H1 (cell line): ENCODE measurements at regions of chr17 and their contacts with region 1.

Region 1: DNA sequence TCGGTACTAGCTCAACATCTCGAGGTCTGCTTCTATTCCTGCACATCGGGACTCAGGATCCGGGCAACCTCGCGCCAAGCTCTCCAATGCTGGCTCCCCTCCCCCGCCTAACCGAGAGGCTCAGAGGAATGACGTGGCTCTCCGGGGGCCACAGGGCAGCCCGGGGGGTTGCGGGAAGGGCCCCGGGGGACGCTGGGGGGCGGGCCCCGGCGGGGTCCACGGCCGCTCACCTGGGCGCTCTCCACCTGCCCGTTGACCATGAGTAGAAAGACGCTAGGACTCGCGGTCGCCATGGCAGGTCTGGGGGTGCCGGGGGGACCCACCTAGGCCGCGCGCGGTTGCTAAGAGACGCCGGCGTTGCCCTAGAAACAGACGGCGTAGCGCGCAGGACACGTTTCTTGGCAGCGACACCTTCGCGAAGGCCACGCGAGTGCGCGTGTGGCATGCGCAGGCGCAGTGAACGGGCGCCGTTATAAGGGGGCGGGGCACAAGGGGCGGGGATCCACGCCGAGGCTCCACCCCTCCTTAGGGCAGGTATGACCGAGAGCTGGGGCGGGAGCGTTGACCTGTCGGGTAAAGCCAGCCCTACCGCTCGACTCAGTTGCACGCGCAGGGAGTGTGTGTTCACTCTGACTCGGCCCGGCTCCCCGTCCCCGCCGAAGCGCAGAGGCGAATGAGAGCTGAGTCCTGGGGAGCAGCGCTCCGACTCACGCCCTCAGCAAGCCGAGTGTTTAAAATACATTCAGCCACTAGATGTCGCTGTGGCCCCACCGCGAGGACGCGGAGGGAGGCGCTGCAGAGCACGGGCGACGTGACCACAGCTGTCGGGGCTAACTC is at the start of gene B9D1:
- DNase-seq: peak; percentile 73 to 97
- H3K4me3 ChIP-seq: peak within 1 kb of the TSS; percentile 34 to 93 (median 75)
- H3K27ac ChIP-seq: no peak within 1 kb of the TSS; the same call in 1 of the 2 replicates
- H3K4me1 ChIP-seq: peaks cover 0 to 9% (median 3%) of the 10 kb centered on the region in 4 experiments; a peak in 4 of 7 replicates
- H3K27me3 ChIP-seq: no peaks in the 10 kb centered on the region; a peak in 1 of 7 replicates
- CTCF ChIP-seq: peak; percentile 91 to 99 (median 95)
- EP300 ChIP-seq: peak in 1 of 2 experiments; percentile 27; a peak in 1 of 3 replicates
- POLR2A ChIP-seq: no peak
- RAD21 ChIP-seq: peak; percentile 99
- total RNA-seq, gene B9D1: 24.6 and 25.4 TPM in 2 replicates

Region 2: GRCh38 chr17:19321481-19322128 is 40.9 kb before region 1 on chr17:
- CTCF ChIA-PET with region 1: interaction called, 11 read pairs
- POLR2A ChIA-PET with region 1: no interaction called
- DNase-seq: no peak
- H3K4me3 ChIP-seq: no peak overlapping the region
- H3K27ac ChIP-seq: no peak overlapping the region
- H3K4me1 ChIP-seq: peaks cover 0 to 16% (median 8%) of the 10 kb centered on the region in 4 experiments; a peak in 6 of 7 replicates
- H3K27me3 ChIP-seq: no peaks in the 10 kb centered on the region
- CTCF ChIP-seq: peak; percentile 38 to 61 (median 56)
- EP300 ChIP-seq: no peak
- POLR2A ChIP-seq: no peak
- RAD21 ChIP-seq: peak in 1 of 2 experiments; percentile 40; a peak in 3 of 4 replicates

Region 3: GRCh38 chr17:19386974-19387920 is 24.8 kb after region 1 on chr17 and contains the start of gene MFAP4:
- CTCF ChIA-PET with region 1: interaction called, 12 read pairs
- POLR2A ChIA-PET with region 1: interaction called, 6 read pairs
- DNase-seq: peak in 1 of 2 experiments; percentile 66
- H3K4me3 ChIP-seq: peak within 1 kb of the TSS in 3 of 4 experiments; percentile 17 to 49 (median 18); a peak in 4 of 8 replicates
- H3K27ac ChIP-seq: peak within 1 kb of the TSS; percentile 30; the same call in 1 of the 2 replicates
- H3K4me1 ChIP-seq: peaks cover 8 to 22% (median 15%) of the 10 kb centered on the region in 4 experiments
- H3K27me3 ChIP-seq: no peaks in the 10 kb centered on the region
- CTCF ChIP-seq: no peak
- EP300 ChIP-seq: no peak
- POLR2A ChIP-seq: no peak
- RAD21 ChIP-seq: no peak
- total RNA-seq, gene MFAP4: 3.6 and 3.8 TPM in 2 replicates

Region 4: GRCh38 chr17:19426631-19427030 is 64.1 kb after region 1 on chr17:
- CTCF ChIA-PET with region 1: interaction called, 14 read pairs
- POLR2A ChIA-PET with region 1: no interaction called
- DNase-seq: no peak
- H3K4me3 ChIP-seq: no peak overlapping the region; a peak in 1 of 8 replicates
- H3K27ac ChIP-seq: no peak overlapping the region
- H3K4me1 ChIP-seq: peaks cover 0 to 7% (median 1%) of the 10 kb centered on the region in 4 experiments; a peak in 3 of 7 replicates
- H3K27me3 ChIP-seq: no peaks in the 10 kb centered on the region
- CTCF ChIP-seq: no peak
- EP300 ChIP-seq: no peak
- POLR2A ChIP-seq: no peak
- RAD21 ChIP-seq: no peak

Region 5: DNA sequence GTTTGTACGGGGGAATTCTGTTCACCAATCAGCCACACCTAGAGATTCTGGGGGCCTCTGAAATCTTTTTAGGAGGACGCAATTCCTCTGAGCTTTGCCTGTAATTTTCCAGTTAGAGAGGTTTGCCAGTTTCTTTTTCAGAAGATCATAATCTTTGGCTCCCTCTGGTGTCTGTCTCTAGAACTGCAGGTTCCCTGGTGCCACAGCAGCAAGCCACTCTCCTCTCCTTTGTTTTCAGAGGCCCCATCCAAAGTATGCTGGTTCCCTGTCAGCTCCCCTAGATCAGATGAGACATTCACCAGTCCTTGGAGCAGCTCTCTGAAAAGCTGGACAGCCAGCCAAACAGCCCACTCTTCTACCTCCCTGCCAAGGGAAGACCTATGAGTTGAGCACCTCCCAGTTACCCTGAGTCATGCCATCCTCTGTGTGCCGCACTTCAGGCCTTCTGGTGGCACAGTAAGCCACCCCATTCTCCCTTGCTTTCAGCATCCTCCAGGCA is 84.6 kb after region 1 on chr17:
- CTCF ChIA-PET with region 1: interaction called, 66 read pairs
- POLR2A ChIA-PET with region 1: interaction called, 9 read pairs
- DNase-seq: peak in 1 of 2 experiments; percentile 93
- H3K4me3 ChIP-seq: no peak overlapping the region
- H3K27ac ChIP-seq: no peak overlapping the region
- H3K4me1 ChIP-seq: peaks cover 2 to 9% (median 4%) of the 10 kb centered on the region in 4 experiments; a peak in 4 of 7 replicates
- H3K27me3 ChIP-seq: no peaks in the 10 kb centered on the region
- CTCF ChIP-seq: peak; percentile 59 to 84 (median 83)
- EP300 ChIP-seq: no peak
- POLR2A ChIP-seq: no peak
- RAD21 ChIP-seq: peak; percentile 90 to 92

Region 6: DNA sequence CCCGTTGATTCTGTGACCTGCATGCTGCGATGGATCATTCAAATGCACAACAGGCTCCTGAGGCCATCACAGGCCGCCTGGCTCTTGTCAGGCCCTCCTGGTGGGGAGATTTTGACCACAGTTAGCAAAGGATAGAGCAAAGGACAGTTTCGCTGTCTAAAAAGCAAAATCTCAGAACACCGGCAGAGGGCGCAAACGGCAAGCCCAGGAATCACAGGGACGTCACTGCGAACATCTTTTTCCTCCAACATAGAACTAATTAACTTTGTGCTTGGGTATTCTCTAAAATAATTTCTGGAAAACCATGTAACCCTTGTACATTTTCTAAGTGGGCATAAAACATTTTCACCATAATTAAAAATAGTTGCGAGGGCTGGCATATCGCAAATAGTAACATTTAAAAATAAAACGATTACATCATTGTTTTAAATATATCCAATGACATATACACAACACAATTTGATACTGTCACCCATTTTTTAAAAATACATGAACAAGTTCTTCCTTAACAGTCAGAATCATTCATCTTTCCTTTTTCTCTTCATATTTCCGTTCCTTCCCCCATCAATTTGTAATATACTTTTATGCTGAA is 151.5 kb after region 1 on chr17:
- CTCF ChIA-PET with region 1: interaction called, 12 read pairs
- POLR2A ChIA-PET with region 1: no interaction called
- DNase-seq: peak in 1 of 2 experiments; percentile 84
- H3K4me3 ChIP-seq: no peak overlapping the region
- H3K27ac ChIP-seq: no peak overlapping the region
- H3K4me1 ChIP-seq: peaks cover 0 to 3% (median 0%) of the 10 kb centered on the region in 4 experiments; a peak in 1 of 7 replicates
- H3K27me3 ChIP-seq: no peaks in the 10 kb centered on the region
- CTCF ChIP-seq: peak; percentile 83 to 95 (median 95)
- EP300 ChIP-seq: no peak
- POLR2A ChIP-seq: no peak
- RAD21 ChIP-seq: peak; percentile 95 to 97